Activated T-helper 1 cell treated with anti-CD3 and anti-CD28 coated beads, Interleukin-12 subunit alpha, Interleukin-12 subunit beta, Interleukin-2, Interleukin-4 antibody, amounts not matched to agents 30 ng/mL and 10 ng/mL and 1 ng/mL, durations not matched to agents 14 hours and 24 hours and 36 hours (primary cell): ENCODE measurements at regions of chr7 and their contacts with region 1.

Region 1: DNA sequence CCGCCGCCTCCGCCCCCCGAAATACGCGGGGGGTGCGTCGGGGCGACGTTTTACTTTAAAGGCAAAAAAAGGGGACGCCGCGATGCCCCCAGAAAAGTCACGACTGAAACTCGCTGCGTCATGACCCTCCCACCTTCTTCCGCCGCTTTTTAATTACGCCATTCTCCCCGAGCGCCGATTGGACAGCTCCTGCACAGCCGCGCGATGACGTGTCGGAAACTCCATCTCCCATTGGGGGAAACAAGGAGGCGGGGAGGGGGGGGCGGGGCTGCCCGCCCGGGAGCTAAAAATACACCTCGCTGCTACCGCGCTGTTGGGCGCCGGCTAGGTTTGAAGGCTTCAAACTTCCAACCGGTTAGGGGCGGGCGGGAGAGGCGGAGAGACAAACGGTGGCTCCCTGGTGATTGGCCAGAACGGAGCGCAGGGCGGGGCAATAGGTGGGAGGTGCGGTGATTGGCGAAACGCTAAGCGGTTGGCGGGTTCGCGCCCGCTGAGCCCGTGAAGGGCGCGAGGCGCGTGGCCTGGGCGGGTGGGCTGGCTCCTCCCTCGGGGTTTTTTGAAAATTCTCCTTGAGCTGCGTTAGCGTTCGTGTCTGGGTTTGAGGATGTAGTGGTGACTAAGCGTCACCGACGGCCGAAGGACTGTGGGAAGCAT is at the start of gene RHEB:
- DNase-seq: peak; percentile 97
- H3K4me3 Mint-ChIP-seq: peak within 1 kb of the TSS; percentile 94
- H3K27ac Mint-ChIP-seq: peak within 1 kb of the TSS; percentile 99
- H3K4me1 Mint-ChIP-seq: peaks cover 32% of the 10 kb centered on the region
- H3K27me3 Mint-ChIP-seq: peaks cover 10% of the 10 kb centered on the region
- total RNA-seq, gene RHEB: 62.5 and 65.5 TPM in 2 replicates

Region 2: DNA sequence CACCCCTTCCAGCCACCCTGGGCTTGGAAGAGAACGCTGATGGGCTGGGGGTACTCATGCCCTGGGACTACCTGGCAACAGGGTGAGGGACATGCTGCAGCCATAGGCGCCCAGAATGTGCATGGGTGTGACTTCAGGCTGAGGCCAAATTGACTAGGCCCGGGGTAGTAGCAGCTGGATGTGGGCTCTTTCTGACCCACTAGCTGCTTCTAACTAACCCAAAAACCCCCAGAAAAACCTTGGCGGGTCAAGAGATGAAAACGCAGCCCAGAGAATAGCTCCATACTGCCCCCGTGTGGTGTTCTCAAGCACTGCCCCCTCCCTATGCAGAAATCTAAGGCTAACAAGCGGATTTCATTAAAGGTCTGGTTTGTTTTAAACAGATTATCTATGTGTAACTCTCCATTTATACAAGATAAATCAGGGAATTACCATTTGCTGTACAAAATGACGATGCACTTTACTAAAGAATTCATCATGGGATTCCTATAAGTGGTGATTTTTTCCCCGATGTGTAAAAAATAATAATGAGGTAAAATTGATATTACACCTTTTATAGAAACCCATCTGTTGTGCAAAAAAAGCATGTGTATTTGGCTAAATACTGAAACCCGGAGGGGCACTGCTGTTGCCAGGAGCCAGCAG is 275.6 kb before region 1 on chr7:
- intact Hi-C with region 1: loop called (anchors 5 kb)
- DNase-seq: peak; percentile 49
- H3K4me3 Mint-ChIP-seq: peak overlapping the region; percentile 49
- H3K27ac Mint-ChIP-seq: no peak overlapping the region
- H3K4me1 Mint-ChIP-seq: peaks cover 26% of the 10 kb centered on the region
- H3K27me3 Mint-ChIP-seq: peaks cover 32% of the 10 kb centered on the region

Region 3: GRCh38 chr7:151472644-151473380 is 47.1 kb before region 1 on chr7:
- intact Hi-C with region 1: loop called (anchors 1 kb)
- DNase-seq: no peak
- H3K4me3 Mint-ChIP-seq: no peak overlapping the region
- H3K27ac Mint-ChIP-seq: no peak overlapping the region
- H3K4me1 Mint-ChIP-seq: peaks cover 54% of the 10 kb centered on the region
- H3K27me3 Mint-ChIP-seq: no peaks in the 10 kb centered on the region